ENCODE measurements at regions of chr4 and their contacts with region 1.

Region 1: DNA sequence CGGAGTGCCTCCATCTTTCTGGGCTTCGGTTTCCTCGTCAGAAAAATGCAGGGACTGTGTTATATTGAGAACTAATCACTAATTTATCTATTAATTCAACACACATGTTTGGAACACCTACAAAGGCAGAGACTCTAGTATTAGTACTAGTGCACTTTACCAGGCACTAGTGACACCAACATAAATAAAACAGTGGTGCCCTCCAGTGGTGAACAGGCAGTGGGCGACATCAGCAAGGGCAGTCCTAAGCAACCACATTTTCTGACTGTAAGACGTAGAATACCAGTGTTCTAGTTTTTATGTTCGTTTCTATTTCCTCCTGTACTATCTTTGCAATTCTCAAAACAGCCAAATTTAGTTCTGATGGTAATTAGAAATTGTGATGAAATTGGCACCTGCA is 69.1 kb upstream of the UCP1 start:
- DNase-seq: no peak
- H3K4me3 ChIP-seq: no peak overlapping the region
- H3K27ac ChIP-seq: no peak overlapping the region
- H3K4me1 ChIP-seq: peaks cover 0 to 4% (median 3%) of the 10 kb centered on the region in 4 experiments; a peak in 5 of 7 replicates
- H3K27me3 ChIP-seq: no peaks in the 10 kb centered on the region
- CTCF ChIP-seq: peak; percentile 69 to 88 (median 75)
- EP300 ChIP-seq: no peak
- POLR2A ChIP-seq: no peak
- RAD21 ChIP-seq: peak; percentile 86 to 92

Region 2: DNA sequence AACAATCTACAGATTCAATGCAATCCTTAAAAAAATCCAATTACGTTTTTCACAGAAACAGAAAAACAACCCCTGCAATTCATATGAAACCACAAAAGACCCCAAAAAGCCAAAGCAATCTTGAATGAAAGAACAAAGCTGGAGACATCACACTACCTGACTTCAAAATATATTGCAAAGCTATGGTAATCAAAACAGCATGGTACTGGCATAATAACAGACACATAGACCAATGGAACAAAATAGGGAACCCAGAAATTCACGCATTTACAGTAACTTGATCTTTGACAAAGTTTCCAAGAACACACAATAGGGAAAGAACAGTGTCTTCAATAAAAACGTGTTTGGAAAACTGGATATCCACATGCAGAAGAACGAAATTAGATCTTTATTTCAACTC is 154.4 kb before region 1 on chr4:
- CTCF ChIA-PET with region 1: no interaction called
- POLR2A ChIA-PET with region 1: no interaction called
- DNase-seq: no peak
- H3K4me3 ChIP-seq: no peak overlapping the region
- H3K27ac ChIP-seq: no peak overlapping the region
- H3K4me1 ChIP-seq: no peaks in the 10 kb centered on the region
- H3K27me3 ChIP-seq: no peaks in the 10 kb centered on the region
- CTCF ChIP-seq: no peak
- EP300 ChIP-seq: no peak
- POLR2A ChIP-seq: no peak
- RAD21 ChIP-seq: no peak

Region 3: GRCh38 chr4:140609548-140610425 is 28.0 kb before region 1 on chr4:
- CTCF ChIA-PET with region 1: interaction called, 12 read pairs
- POLR2A ChIA-PET with region 1: interaction called, 5 read pairs
- DNase-seq: no peak
- H3K4me3 ChIP-seq: no peak overlapping the region
- H3K27ac ChIP-seq: no peak overlapping the region
- H3K4me1 ChIP-seq: no peaks in the 10 kb centered on the region
- H3K27me3 ChIP-seq: no peaks in the 10 kb centered on the region
- CTCF ChIP-seq: peak in 1 of 3 experiments; percentile 18; a peak in 1 of 4 replicates
- EP300 ChIP-seq: no peak
- POLR2A ChIP-seq: no peak
- RAD21 ChIP-seq: peak; percentile 47 to 48

Region 4: GRCh38 chr4:140653718-140654494 is 16.1 kb after region 1 on chr4:
- CTCF ChIA-PET with region 1: interaction called, 12 read pairs
- POLR2A ChIA-PET with region 1: interaction called, 3 read pairs
- DNase-seq: peak in 1 of 2 experiments; percentile 49
- H3K4me3 ChIP-seq: peak overlapping the region in 1 of 4 experiments; percentile 30; a peak in 1 of 8 replicates
- H3K27ac ChIP-seq: peak overlapping the region; percentile 59
- H3K4me1 ChIP-seq: peaks cover 0 to 6% (median 3%) of the 10 kb centered on the region in 4 experiments; a peak in 4 of 7 replicates
- H3K27me3 ChIP-seq: no peaks in the 10 kb centered on the region
- CTCF ChIP-seq: no peak
- EP300 ChIP-seq: no peak
- POLR2A ChIP-seq: no peak
- RAD21 ChIP-seq: no peak

Region 5: GRCh38 chr4:140707325-140707724 is 69.5 kb after region 1 on chr4:
- CTCF ChIA-PET with region 1: no interaction called
- POLR2A ChIA-PET with region 1: no interaction called
- DNase-seq: no peak
- H3K4me3 ChIP-seq: no peak overlapping the region
- H3K27ac ChIP-seq: no peak overlapping the region
- H3K4me1 ChIP-seq: no peaks in the 10 kb centered on the region; a peak in 1 of 7 replicates
- H3K27me3 ChIP-seq: no peaks in the 10 kb centered on the region
- CTCF ChIP-seq: no peak
- EP300 ChIP-seq: no peak
- POLR2A ChIP-seq: no peak
- RAD21 ChIP-seq: no peak

Region 6: GRCh38 chr4:140851032-140851636 is 213.3 kb after region 1 on chr4:
- CTCF ChIA-PET with region 1: interaction called, 17 read pairs
- POLR2A ChIA-PET with region 1: no interaction called
- DNase-seq: peak in 1 of 2 experiments; percentile 56
- H3K4me3 ChIP-seq: no peak overlapping the region
- H3K27ac ChIP-seq: no peak overlapping the region
- H3K4me1 ChIP-seq: no peaks in the 10 kb centered on the region
- H3K27me3 ChIP-seq: no peaks in the 10 kb centered on the region
- CTCF ChIP-seq: peak in 2 of 3 experiments; percentile 76 to 88; a peak in 3 of 4 replicates
- EP300 ChIP-seq: no peak
- POLR2A ChIP-seq: no peak
- RAD21 ChIP-seq: peak; percentile 98